Prostate gland (tissue), 2 donors: ENCODE measurements at regions of chr13 and their contacts with region 1.

Region 1: GRCh38 chr13:30306762-30307193 is 573 bp downstream of the KATNAL1 start:
- DNase-seq: peak; percentile 93
- H3K4me3 ChIP-seq: peak overlapping the region; percentile 95 to 98
- H3K27ac ChIP-seq: peak overlapping the region; percentile 89
- H3K4me1 ChIP-seq: no peaks in the 10 kb centered on the region
- H3K27me3 ChIP-seq: no peaks in the 10 kb centered on the region
- CTCF ChIP-seq: no peak
- POLR2A ChIP-seq: no peak

Region 2: DNA sequence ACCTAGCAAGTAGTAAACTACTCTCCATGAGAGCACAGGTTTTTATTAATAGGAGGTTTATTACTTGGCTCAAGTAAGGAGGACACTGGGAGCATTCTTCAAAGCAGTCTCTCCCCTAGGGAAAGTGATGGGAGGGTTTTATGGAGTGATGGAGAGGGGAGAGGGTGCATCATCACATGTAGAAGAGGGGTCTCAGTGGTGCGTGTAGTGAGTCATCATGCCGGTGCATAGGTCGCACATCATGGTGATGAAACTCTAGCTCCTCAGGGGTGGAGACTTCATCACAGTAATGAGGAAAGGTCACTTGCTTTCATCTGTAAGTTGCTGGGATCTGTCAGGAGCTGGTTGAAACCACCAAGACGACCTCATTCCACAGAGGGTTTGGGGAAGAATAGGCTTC is 245.6 kb before region 1 on chr13:
- intact Hi-C with region 1: no loop called
- DNase-seq: no peak
- H3K4me3 ChIP-seq: no peak overlapping the region
- H3K27ac ChIP-seq: no peak overlapping the region
- H3K4me1 ChIP-seq: no peaks in the 10 kb centered on the region
- H3K27me3 ChIP-seq: no peaks in the 10 kb centered on the region
- CTCF ChIP-seq: no peak
- POLR2A ChIP-seq: no peak

Region 3: DNA sequence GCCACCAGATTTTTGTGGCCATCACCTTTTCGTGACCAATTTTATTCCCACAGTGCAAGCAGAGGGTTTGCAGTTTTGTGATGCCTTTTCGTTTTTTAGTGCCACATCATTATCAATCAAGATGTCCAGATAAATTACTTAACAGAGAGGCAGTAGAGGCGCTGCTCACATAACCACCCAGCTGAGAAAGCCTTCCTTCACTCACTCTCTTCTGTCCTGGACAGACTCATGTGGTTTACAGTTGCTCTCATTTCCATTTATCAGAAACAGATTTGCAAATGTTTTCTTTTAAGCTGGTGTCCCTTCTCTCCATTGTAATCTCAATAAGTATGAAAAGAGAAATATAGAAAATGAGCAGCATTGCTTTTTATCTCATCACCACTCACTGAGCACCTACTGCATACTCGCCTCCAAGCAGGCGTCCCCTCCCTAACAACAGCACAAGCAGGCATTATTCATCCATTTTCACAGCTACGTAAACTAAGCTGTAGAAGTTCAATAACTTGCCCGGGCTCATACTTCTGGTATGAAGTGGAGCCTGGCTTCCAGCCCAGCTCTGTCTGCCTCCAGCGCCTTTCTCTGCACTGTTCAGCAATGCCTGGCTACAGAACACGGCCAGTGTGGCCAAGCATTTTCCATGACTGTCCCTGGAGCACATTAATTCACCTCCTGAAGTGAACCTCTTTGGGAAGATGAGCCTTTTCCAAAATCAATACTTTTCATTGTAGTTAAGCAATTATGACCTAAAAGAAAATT is 35.2 kb after region 1 on chr13:
- intact Hi-C with region 1: loop called (anchors 5 kb)
- DNase-seq: peak; percentile 91
- H3K4me3 ChIP-seq: no peak overlapping the region
- H3K27ac ChIP-seq: peak overlapping the region; percentile 30 to 39
- H3K4me1 ChIP-seq: peaks cover 12% of the 10 kb centered on the region
- H3K27me3 ChIP-seq: no peaks in the 10 kb centered on the region
- CTCF ChIP-seq: no peak
- POLR2A ChIP-seq: no peak

Region 4: DNA sequence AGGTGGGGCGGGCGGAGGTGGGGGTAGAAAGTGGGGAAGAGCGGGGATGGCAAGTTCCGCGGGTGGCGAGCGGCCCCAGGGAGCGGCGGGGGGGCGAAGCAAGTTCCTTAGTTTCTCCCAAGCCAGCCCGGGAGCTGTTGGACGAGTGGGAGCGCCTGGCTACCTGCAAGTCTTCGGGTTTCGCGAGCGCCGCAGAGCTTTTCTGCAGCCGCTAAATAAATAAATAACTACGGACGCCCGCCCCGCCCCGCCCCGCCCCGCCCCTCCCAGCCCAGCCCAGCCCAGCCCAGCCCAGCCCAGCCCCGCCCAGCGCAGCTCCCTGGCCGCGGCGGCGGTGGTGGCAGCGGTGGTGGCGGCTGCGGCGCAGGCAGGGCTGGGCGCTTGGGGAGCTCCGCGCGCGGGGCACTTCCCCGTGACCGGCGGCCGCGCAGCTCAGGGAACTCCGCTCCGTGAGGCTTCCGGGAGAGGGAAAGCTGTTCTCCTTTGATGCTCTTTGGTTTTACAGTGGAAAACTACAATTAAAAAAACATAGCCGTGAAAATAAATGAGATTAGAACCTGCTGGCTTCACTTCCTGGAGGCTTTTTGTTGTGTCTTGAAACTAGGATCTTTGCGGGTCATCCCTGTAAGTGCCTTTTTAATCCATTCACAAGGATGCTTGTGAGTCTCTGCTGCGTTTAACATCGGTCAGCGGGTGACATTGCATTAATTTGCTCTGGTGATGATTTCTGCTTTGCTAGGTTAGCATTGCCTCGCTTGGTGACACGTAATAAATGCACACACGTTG is 115.5 kb after region 1 on chr13 and contains the start of gene UBE2L5:
- intact Hi-C with region 1: loop called (anchors 10 kb)
- DNase-seq: peak; percentile 82
- H3K4me3 ChIP-seq: peak within 1 kb of the TSS; percentile 41 to 54
- H3K27ac ChIP-seq: peak within 1 kb of the TSS; percentile 96 to 98
- H3K4me1 ChIP-seq: no peaks in the 10 kb centered on the region
- H3K27me3 ChIP-seq: no peaks in the 10 kb centered on the region
- CTCF ChIP-seq: no peak
- POLR2A ChIP-seq: peak; percentile 79
- total RNA-seq, gene UBE2L5: 0.18 to 5.2 TPM

Region 5: DNA sequence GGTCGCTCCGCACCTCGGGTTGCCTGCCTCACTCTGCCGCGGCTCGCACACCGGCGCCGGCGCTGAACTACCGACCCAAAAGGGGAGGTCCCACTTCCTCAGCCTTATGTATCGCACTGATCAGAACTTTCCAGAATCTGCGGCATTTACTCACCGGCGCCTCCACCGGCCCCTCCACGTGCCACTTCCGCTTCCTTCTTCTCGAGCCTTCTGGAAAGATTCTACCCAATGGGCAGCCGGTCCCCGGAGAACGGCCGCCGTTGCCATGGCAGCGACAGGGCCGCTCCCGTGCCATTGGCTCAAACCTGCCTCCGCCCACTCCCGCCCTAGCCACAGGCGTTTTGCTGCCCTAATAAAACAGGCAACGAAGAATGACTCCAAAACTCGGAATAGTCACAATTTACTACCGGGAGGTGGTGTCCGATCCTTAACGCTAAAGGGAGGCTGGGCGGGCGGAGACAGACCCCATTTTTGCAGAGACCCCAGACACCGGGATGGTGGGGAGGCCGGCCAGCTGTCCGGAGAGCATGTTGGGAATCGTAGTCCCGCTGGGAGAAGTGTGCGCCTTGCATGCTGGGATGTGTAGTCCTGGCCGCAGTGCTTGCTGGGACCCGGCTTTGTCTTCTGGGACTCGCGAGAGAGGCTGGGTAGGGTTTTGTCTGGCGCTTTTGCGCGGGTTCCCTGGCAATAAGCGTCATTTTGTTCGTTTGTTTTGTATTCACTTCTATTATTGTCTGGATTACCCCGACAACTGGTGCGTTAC is 855.2 kb after region 1 on chr13 and contains the start of gene HSPH1:
- intact Hi-C with region 1: loop called (anchors 5 kb)
- DNase-seq: peak; percentile 98
- H3K4me3 ChIP-seq: peak within 1 kb of the TSS; percentile 55 to 88
- H3K27ac ChIP-seq: peak within 1 kb of the TSS; percentile 92 to 100
- H3K4me1 ChIP-seq: no peaks in the 10 kb centered on the region
- H3K27me3 ChIP-seq: no peaks in the 10 kb centered on the region
- CTCF ChIP-seq: peak in 1 of 4 experiments; percentile 34
- POLR2A ChIP-seq: peak; percentile 95
- total RNA-seq, gene HSPH1: 33.5 to 60.6 TPM